ENCODE measurements at regions of chr5 and their contacts with region 1.

Region 1: DNA sequence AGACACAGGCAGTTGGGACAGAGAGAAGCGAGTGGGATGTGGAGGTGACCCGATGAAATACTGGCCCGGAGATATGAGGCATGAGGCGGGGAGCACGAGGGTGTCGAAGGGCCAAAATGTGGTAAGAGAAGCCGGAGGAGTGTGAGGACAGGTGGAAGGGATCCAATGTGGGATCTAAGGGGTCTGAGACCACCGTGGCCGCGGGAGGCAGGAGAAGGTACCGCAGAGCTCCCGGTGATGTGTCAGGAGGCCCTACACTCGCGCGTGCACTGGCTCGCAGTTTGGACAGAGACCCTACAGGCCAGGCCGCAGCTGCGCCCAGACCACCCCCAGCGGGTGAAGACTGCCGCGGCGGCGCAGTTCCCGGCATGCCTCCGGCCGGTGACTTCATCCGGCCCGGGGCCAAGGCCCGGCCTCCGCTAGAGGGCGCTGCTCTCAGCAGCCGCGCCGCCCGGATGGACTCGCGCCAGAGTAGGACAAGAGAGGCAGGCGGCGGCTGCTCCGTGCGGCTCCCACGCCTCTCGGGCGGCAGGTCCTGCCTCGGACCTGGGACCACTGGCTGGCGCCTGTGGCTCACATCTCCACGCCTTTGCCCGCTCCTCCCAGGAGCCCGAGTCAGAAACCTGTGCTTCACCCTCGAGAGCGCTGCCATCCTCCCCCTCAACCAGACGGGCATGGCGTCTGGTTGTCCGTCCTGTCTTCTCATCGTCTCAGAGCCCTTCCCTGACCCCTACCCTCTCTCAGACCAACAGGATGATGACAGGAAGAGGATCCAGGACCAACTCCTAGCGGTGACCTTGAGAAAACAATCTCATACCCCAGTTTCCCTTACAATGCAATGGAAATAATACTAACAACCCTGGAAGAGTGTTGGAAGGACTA is 35.4 kb upstream of the STING1 start:
- DNase-seq: peak; percentile 92
- CTCF ChIP-seq: peak; percentile 98

Region 2: DNA sequence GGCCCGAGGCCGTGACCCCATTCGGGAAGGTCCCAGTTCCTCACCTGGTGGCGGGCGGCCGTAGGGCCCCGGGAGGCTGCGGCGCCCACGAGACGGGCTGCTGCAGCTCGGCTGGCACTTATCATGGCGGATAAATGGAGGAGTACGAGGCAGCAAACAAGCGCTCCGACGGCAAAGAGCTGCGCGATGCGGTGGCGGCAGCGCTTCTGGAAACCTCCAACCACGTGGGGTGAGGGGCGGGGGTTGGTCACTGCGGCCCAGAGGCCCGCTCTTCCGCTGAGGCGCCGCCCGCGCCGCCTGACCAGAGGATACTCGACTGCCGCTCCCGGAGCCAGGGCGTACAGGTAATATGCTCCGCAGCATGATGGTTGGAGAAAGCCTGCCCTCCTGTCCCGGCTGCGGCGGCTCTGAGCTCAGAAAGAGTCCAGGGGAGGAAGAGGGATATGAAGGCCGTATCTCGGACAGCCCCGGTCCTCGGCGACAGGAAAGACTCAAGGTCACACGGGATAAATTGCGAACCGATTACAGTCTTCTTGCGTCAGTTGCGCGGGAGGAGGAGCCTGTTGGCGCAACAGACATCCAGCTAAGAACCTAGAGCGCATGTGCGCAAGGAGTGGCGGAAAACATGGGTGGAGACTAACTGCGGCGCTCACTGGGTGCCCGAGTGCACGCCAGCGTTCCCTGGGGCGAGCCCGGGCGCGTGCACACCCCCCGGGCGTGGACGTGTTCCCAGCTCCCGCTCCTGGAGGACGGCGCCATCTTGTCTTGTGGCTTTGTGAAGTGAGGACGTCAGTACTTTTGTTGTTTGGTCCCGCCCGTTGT is 942.5 kb before region 1 on chr5 and contains the start of gene HSPA9:
- in situ Hi-C with region 1: no loop called
- DNase-seq: peak; percentile 99
- CTCF ChIP-seq: no peak

Region 3: DNA sequence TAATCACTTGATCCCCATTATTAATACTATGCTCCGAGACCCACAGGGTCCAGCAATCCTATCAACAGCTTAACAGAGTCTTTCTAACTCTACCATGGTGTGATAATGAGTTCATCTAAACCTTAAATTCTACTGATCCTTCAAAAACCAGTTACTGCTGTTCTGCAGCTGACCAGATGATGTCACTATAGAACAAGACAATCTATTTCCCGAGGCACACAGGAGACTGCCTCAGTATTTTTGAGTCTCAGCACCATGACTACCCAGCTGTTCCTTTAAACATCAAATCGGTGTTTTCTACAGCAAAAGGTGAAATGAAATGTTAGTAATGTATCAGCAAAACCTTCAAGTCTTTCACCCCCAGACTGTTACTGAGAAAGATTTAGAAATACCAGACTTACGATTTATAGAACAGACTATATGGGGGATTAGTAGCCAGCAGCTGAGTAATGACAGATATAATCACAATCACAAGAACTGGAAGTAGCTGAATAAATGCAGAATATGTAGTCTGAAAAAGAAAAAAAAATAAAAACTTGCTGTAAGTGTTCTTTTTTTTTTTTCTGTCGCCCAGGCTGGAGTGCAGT is 95.5 kb before region 1 on chr5:
- in situ Hi-C with region 1: loop called (anchors 5 kb)
- DNase-seq: peak; percentile 81
- CTCF ChIP-seq: peak; percentile 87

Measured in GM13977 (cell line).